Natural killer cell (primary cell): ENCODE measurements at regions of chr10 and their contacts with region 1.

Region 1: DNA sequence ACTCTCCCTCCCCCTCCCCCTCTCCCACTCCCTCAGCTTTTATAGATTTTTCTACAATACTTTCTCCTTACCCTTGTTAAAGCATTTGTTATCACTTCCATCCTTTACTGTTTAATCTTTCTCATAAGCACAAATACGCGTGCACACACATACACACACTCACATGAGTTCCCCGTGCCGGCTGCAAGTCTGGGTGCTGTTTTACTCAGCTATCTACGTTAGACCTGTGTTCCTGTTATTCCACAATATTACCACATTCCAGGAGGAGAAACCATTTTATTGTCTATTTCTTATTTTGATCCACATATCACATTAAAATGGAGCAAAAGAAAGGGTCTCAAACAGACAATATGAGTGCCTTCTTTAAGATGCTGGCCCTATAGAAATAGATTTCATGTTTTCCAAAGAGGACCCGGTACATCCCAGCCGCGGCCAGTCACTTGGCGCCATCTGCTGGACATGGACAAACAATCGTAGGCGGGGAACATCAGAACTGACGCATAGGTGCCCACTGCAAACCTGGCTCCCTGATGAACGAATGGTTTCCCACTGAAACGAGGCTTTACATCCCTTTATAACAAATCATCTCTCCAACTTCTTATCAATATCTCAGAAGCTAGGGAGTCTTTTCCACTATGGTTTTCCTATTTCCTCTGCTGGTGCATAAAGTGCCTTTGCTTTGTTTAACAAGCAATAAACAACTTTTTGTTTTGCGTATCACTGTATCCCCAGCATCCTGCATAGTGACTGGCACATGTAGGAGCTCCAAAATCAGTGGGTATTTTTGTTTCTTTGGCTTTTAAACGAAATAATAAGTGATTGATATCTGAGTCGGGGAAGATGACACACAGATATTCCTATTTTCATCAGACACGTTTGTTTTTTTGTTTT is 25.2 kb upstream of the OPTN start:
- DNase-seq: peak; percentile 37 to 63
- ATAC-seq: peak in 2 of 3 donors; percentile 52 to 83
- H3K4me3 ChIP-seq: no peak overlapping the region
- H3K4me3 Mint-ChIP-seq: no peak overlapping the region
- H3K27ac ChIP-seq: no peak overlapping the region
- H3K27ac Mint-ChIP-seq: no peak overlapping the region
- H3K4me1 ChIP-seq: no peaks in the 10 kb centered on the region
- H3K4me1 Mint-ChIP-seq: peaks cover 0 to 7% of the 10 kb centered on the region in 2 donors
- H3K27me3 ChIP-seq: peaks cover 7% of the 10 kb centered on the region
- H3K27me3 Mint-ChIP-seq: peaks cover 18 to 28% of the 10 kb centered on the region in 2 donors
- CTCF ChIP-seq: peak; percentile 73

Region 2: DNA sequence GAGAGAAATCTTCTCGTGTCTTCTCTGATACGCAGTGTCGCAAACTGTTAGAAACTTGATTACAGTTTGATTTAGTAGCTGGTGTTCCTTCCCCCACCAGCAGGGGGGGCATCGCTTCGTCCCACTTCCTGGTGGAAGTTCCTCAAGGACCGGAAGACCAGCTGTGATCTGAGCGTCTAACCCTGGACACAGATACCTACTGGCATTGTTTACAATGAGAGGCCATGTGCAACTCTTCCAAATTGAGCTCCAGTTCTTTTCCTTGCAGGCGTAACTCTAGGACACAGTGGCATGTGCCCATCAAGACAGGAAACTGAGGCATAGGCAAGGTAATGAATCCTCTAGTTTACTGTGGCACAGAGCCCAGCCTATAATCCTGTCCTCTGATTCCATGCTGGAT is 292.3 kb before region 1 on chr10:
- intact Hi-C with region 1: loop called (anchors 10 kb)
- DNase-seq: peak in 1 of 2 donors; percentile 38
- ATAC-seq: no peak
- H3K4me3 ChIP-seq: no peak overlapping the region
- H3K4me3 Mint-ChIP-seq: no peak overlapping the region
- H3K27ac ChIP-seq: no peak overlapping the region
- H3K27ac Mint-ChIP-seq: no peak overlapping the region
- H3K4me1 ChIP-seq: no peaks in the 10 kb centered on the region
- H3K4me1 Mint-ChIP-seq: peaks cover 6 to 10% of the 10 kb centered on the region in 2 donors
- H3K27me3 ChIP-seq: no peaks in the 10 kb centered on the region
- H3K27me3 Mint-ChIP-seq: no peaks in the 10 kb centered on the region
- CTCF ChIP-seq: peak; percentile 75

Region 3: GRCh38 chr10:12960334-12960898 is 114.4 kb before region 1 on chr10:
- intact Hi-C with region 1: no loop called
- DNase-seq: no peak
- ATAC-seq: no peak
- H3K4me3 ChIP-seq: no peak overlapping the region
- H3K4me3 Mint-ChIP-seq: no peak overlapping the region
- H3K27ac ChIP-seq: no peak overlapping the region
- H3K27ac Mint-ChIP-seq: no peak overlapping the region
- H3K4me1 ChIP-seq: no peaks in the 10 kb centered on the region
- H3K4me1 Mint-ChIP-seq: no peaks in the 10 kb centered on the region
- H3K27me3 ChIP-seq: no peaks in the 10 kb centered on the region
- H3K27me3 Mint-ChIP-seq: peaks cover 0 to 2% of the 10 kb centered on the region in 2 donors
- CTCF ChIP-seq: no peak

Region 4: GRCh38 chr10:13049774-13050420 is 24.9 kb before region 1 on chr10:
- intact Hi-C with region 1: no loop called
- DNase-seq: no peak
- ATAC-seq: no peak
- H3K4me3 ChIP-seq: no peak overlapping the region
- H3K4me3 Mint-ChIP-seq: no peak overlapping the region
- H3K27ac ChIP-seq: no peak overlapping the region
- H3K27ac Mint-ChIP-seq: no peak overlapping the region
- H3K4me1 ChIP-seq: peaks cover 9% of the 10 kb centered on the region
- H3K4me1 Mint-ChIP-seq: peaks cover 8 to 9% of the 10 kb centered on the region in 2 donors
- H3K27me3 ChIP-seq: no peaks in the 10 kb centered on the region
- H3K27me3 Mint-ChIP-seq: peaks cover 14 to 17% of the 10 kb centered on the region in 2 donors
- CTCF ChIP-seq: no peak

Region 5: DNA sequence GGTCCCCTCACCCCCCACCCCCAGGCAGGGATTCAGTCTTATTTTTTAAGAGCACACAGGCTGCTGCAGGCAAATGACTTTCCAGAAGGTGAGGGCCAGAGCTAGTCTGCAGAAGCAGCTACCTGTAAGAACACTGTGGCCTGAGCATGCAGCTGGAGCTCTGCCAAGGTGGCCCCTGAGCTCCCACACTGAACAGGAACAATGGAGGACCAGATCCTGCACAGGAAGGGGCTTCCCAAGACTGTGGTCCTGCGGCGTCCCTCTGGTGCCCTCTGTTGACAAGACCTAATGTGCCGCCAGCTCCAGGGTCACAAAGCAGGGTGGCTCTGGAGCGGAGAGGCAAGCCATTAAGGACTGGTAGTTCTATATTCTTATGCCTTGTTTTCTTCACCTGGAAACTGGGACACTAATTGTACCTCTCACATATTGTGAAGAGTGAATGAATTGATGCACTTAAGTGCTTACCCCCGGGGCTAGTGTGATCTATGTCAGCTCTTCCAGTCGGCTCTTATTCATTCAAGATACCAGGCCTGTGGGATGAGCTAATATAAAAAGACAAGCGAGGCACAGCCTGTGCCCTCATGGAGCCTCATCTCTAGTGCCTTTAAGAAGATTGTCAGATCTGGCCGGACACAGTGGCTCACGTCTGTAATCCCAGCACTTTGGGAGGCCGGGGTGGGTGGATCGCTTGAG is 462.0 kb after region 1 on chr10:
- intact Hi-C with region 1: no loop called
- DNase-seq: peak in 1 of 2 donors; percentile 38
- ATAC-seq: peak in 1 of 3 donors; percentile 44
- H3K4me3 ChIP-seq: no peak overlapping the region
- H3K4me3 Mint-ChIP-seq: no peak overlapping the region
- H3K27ac ChIP-seq: no peak overlapping the region
- H3K27ac Mint-ChIP-seq: no peak overlapping the region
- H3K4me1 ChIP-seq: no peaks in the 10 kb centered on the region
- H3K4me1 Mint-ChIP-seq: no peaks in the 10 kb centered on the region
- H3K27me3 ChIP-seq: peaks cover 4% of the 10 kb centered on the region
- H3K27me3 Mint-ChIP-seq: peaks cover 30 to 35% of the 10 kb centered on the region in 2 donors
- CTCF ChIP-seq: no peak